Psoas muscle (tissue), 8 donors: ENCODE measurements at regions of chr1 and their contacts with region 1.

Region 1: GRCh38 chr1:235866913-235867845 is 473 bp upstream of the LYST start:
- DNase-seq: peak; percentile 95 to 98
- ATAC-seq: peak; percentile 98 to 99 (median 99)
- H3K4me3 ChIP-seq: peak overlapping the region; percentile 97
- H3K27ac ChIP-seq: peak overlapping the region; percentile 93
- H3K4me1 ChIP-seq: peaks cover 17% of the 10 kb centered on the region
- H3K27me3 ChIP-seq: no peaks in the 10 kb centered on the region
- CTCF ChIP-seq: no peak

Region 2: GRCh38 chr1:235504496-235505222 is 362.5 kb before region 1 on chr1:
- intact Hi-C with region 1: loop called in 1 of 2 experiments (anchors 5 kb)
- DNase-seq: peak; percentile 99 to 100
- ATAC-seq: peak; percentile 87 to 92 (median 89)
- H3K4me3 ChIP-seq: peak overlapping the region; percentile 87
- H3K27ac ChIP-seq: peak overlapping the region; percentile 99
- H3K4me1 ChIP-seq: peaks cover 32% of the 10 kb centered on the region
- H3K27me3 ChIP-seq: no peaks in the 10 kb centered on the region
- CTCF ChIP-seq: peak; percentile 78

Region 3: GRCh38 chr1:235809688-235810397 is 57.3 kb before region 1 on chr1:
- intact Hi-C with region 1: no loop called
- DNase-seq: no peak
- ATAC-seq: no peak
- H3K4me3 ChIP-seq: no peak overlapping the region
- H3K27ac ChIP-seq: no peak overlapping the region
- H3K4me1 ChIP-seq: no peaks in the 10 kb centered on the region
- H3K27me3 ChIP-seq: no peaks in the 10 kb centered on the region
- CTCF ChIP-seq: no peak

Region 4: GRCh38 chr1:235883261-235883927 is 16.2 kb after region 1 on chr1:
- intact Hi-C with region 1: no loop called
- DNase-seq: peak; percentile 88 to 90
- ATAC-seq: peak; percentile 67 to 88 (median 76)
- H3K4me3 ChIP-seq: peak overlapping the region; percentile 4
- H3K27ac ChIP-seq: peak overlapping the region; percentile 4
- H3K4me1 ChIP-seq: peaks cover 5% of the 10 kb centered on the region
- H3K27me3 ChIP-seq: peaks cover 0 to 4% (median 0%) of the 10 kb centered on the region in 3 donors
- CTCF ChIP-seq: no peak

Region 5: DNA sequence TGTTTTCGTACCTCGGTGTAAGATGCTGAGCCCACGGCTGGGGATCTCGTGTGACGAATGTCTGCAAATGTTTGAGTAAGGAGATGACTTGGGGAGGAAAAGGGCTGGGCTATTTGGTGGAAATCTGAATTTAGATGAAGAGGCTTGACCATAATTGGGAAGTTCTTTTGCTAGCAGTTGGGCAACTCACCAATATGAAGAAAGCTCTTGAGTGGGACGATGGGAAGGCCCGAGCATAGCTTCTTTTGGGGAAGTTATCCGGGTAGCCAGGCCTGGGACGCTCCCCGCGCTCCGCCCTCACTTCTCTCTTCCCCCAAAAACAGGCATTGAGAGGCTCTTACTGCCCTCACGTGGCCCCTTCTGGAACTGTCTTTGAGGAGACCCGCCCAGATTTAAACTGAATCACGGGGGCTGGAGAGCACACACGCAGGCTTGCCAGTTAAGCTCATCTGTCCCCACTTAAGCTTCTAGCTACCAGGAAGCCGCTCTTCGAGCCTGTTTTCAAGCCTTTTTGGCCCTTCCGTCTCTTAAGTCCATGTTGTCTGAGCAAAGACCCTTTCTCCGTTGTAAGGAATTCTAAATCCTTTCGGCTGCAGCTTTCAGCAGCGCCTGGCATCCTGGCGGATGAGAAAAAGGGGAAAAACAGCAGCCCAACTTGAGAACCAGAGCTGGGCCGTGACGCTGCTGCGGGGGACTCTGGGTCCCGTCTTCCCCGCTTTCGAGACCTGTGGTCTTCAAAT is 104.6 kb after region 1 on chr1:
- intact Hi-C with region 1: loop called in 1 of 2 experiments (anchors 10 kb)
- DNase-seq: peak; percentile 91 to 94
- ATAC-seq: peak; percentile 89 to 95 (median 94)
- H3K4me3 ChIP-seq: peak overlapping the region; percentile 62
- H3K27ac ChIP-seq: peak overlapping the region; percentile 77
- H3K4me1 ChIP-seq: peaks cover 5% of the 10 kb centered on the region
- H3K27me3 ChIP-seq: no peaks in the 10 kb centered on the region
- CTCF ChIP-seq: peak; percentile 74

Region 6: DNA sequence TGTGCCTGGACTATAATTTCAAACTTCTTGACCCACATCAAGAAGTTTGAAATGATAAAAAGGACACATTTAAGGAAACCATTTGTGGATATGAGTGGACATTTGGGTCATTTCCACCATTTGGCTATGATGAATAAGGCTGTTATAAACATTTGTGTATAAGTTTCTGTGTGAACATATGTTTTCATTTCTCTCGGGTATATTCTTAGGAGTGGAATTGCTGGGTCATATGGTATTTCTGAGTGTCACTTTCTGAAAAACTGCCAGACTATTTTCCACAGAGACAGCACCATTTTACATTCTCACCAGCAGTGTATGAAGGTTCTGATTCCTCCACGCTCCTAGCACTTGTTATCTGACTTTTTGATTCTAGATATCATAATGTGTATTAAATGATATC is 326.0 kb after region 1 on chr1:
- intact Hi-C with region 1: no loop called
- DNase-seq: no peak
- ATAC-seq: no peak
- H3K4me3 ChIP-seq: no peak overlapping the region
- H3K27ac ChIP-seq: no peak overlapping the region
- H3K4me1 ChIP-seq: no peaks in the 10 kb centered on the region
- H3K27me3 ChIP-seq: no peaks in the 10 kb centered on the region
- CTCF ChIP-seq: no peak